T-cell (primary cell): ENCODE measurements at regions of chr22 and their contacts with region 1.

Region 1: GRCh38 chr22:37484133-37484824 is 1.9 kb downstream of the MFNG start:
- DNase-seq: peak; percentile 71 to 89 (median 78)
- ATAC-seq: peak; percentile 78 to 82 (median 80)
- H3K4me3 ChIP-seq: peak overlapping the region; percentile 89 to 98
- H3K4me3 Mint-ChIP-seq: peak overlapping the region; percentile 86 to 96 (median 94)
- H3K27ac ChIP-seq: peak overlapping the region; percentile 73
- H3K27ac Mint-ChIP-seq: peak overlapping the region; percentile 98
- H3K4me1 ChIP-seq: peaks cover 16 to 88% of the 10 kb centered on the region in 2 experiments
- H3K4me1 Mint-ChIP-seq: peaks cover 60 to 76% (median 61%) of the 10 kb centered on the region in 3 donors
- H3K27me3 ChIP-seq: no peaks in the 10 kb centered on the region
- H3K27me3 Mint-ChIP-seq: no peaks in the 10 kb centered on the region

Region 2: GRCh38 chr22:37394341-37394740 is 89.9 kb before region 1 on chr22:
- CTCF ChIA-PET with region 1: no interaction called
- POLR2A ChIA-PET with region 1: no interaction called
- DNase-seq: no peak
- ATAC-seq: no peak
- H3K4me3 ChIP-seq: no peak overlapping the region
- H3K4me3 Mint-ChIP-seq: no peak overlapping the region
- H3K27ac ChIP-seq: no peak overlapping the region
- H3K27ac Mint-ChIP-seq: no peak overlapping the region
- H3K4me1 ChIP-seq: no peaks in the 10 kb centered on the region
- H3K4me1 Mint-ChIP-seq: no peaks in the 10 kb centered on the region
- H3K27me3 ChIP-seq: peaks cover 0 to 41% of the 10 kb centered on the region in 2 experiments
- H3K27me3 Mint-ChIP-seq: peaks cover 7 to 22% of the 10 kb centered on the region in 2 donors

Region 3: DNA sequence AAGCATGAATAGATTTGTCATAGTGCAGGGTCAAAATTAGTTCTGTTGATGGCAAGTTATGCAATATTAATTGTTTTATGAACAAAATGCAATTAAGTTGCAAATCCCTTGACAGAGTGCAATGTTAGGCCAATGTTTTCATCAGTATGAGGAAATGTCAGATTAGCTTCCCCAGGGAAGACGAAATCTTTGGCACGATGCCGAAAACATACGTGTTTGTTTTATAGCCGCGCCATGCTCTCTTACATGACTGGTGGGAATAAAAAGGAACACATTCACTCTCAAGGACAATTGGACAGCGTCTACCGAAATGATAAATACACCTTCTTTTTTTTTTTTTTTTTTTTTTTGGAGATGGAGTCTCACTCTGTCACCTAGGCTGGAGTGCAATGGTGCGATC is 25.1 kb before region 1 on chr22:
- CTCF ChIA-PET with region 1: interaction called in 1 of 2 experiments, 15 read pairs
- POLR2A ChIA-PET with region 1: no interaction called
- DNase-seq: no peak
- ATAC-seq: no peak
- H3K4me3 ChIP-seq: no peak overlapping the region
- H3K4me3 Mint-ChIP-seq: no peak overlapping the region
- H3K27ac ChIP-seq: no peak overlapping the region
- H3K27ac Mint-ChIP-seq: no peak overlapping the region
- H3K4me1 ChIP-seq: peaks cover 0 to 3% of the 10 kb centered on the region in 2 experiments
- H3K4me1 Mint-ChIP-seq: peaks cover 3 to 8% (median 5%) of the 10 kb centered on the region in 3 donors
- H3K27me3 ChIP-seq: peaks cover 0 to 2% of the 10 kb centered on the region in 2 experiments
- H3K27me3 Mint-ChIP-seq: no peaks in the 10 kb centered on the region